ENCODE measurements at regions of chr13 and their contacts with region 1.

Region 1: GRCh38 chr13:31199849-31200636 is at the start of gene B3GLCT:
- DNase-seq: peak; percentile 82
- ATAC-seq: peak; percentile 88 to 91
- total RNA-seq, gene B3GLCT: 15.4 to 16.7 TPM

Region 2: DNA sequence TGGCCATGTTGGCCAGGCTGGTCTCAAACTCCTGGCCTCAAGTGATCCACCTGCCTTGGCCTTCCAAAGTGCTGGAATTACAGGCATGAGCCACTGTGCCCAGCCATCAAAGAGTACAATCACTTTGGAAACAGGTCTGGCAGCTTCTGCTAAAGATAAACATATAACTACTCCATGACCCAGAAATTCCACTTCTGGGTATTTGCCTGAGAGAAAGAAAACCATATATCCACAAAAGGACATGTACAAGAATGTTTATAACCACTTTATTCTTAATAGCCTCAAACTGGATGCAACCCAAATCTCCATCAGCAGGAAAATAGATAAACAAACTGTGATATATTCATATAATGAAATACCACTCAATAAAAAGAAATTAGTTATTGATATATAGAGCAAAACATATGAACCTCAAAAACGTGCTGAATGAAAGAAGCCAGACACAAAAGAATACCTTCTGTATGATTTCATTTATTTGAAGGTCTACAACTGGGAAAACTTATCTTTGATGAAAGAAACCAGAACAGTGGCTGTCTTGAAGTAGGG is 227.1 kb before region 1 on chr13:
- intact Hi-C with region 1: no loop called
- DNase-seq: no peak
- ATAC-seq: no peak

Region 3: DNA sequence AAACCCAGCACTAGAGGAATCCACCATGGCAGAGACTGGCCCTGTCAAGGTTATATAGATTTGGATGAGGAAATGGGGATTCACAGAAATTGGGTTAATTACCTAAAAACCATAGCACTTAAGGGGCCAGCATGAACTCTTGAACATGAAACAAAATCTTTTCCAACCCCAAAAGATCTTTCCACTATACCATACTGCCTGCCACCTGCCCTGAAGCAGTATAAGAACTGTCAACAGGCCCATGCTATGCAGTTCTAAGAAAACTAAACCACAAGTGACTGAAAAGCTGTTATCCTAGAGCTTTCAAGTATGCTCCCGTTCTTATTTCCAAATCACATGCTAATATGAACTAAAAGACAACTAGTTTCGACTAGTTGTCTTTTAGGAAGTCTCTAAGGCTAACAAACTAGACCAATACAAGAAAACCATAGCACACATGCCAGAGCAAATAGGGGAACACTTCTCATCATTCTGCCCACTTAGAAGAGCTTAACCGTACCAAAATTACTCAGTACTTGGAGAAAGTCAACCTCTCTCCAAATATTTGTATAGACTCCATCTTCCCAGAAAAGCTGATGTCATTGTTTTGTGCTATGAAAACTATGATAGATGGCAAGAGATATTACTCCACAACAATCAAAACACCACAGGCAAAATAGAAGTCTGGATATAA is 65.9 kb before region 1 on chr13:
- intact Hi-C with region 1: no loop called
- DNase-seq: no peak
- ATAC-seq: no peak

Region 4: GRCh38 chr13:31161828-31162590 is 38.0 kb before region 1 on chr13 and contains the start of gene HSPH1:
- intact Hi-C with region 1: loop called in 1 of 2 experiments (anchors 5 kb)
- DNase-seq: peak; percentile 100
- ATAC-seq: peak; percentile 96 to 98
- total RNA-seq, gene HSPH1: 49.0 to 83.2 TPM

Measured in left cardiac atrium (tissue), 4 donors.